A673 (cell line): ENCODE measurements at regions of chr2 and their contacts with region 1.

Region 1: DNA sequence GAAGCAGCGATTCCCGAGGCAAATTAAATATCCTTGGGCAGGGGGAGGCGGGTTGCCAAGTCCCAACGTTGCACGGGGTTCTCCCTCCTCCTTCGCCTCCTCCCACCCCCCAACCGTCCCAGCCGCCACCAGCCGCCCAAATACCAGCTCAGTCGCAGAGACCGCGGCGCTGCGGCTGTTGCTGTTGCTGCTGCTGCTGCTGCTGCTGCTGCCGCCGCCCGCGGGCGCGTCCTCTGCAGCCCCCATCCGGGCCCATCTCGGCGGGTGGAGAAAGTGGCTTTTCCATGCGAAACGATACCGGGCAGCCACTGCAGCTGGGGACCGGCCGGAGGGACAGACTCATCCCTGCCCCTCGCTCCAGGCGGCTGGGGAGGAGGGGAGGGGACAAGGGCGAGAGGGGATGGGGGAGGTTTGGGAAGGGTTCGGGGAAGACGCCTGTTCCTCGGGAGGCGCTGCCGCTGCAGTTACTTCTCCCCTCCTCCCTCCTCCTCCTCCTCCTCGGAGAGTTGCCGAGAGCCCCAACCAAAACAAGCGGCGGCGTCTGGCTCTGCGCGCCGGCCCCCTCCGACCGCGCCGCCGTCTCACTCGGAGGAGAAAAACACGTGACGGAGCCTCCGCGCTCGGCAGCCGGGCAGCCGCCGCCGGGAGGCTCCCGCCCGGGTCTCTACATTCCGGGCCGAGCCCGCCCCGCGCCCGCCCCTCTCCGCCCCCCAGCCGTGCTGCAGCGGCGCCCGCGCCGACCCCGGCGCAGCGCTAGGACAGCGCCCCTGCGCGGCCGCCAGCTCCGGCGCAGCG is at the start of gene IRS1:
- DNase-seq: peak; percentile 90
- H3K4me3 ChIP-seq: peak within 1 kb of the TSS; percentile 91
- H3K27ac ChIP-seq: peak within 1 kb of the TSS; percentile 88
- H3K4me1 ChIP-seq: peaks cover 27% of the 10 kb centered on the region
- H3K27me3 ChIP-seq: no peaks in the 10 kb centered on the region
- CTCF ChIP-seq: no peak
- total RNA-seq, gene IRS1: 27.9 and 29.3 TPM in 2 replicates

Region 2: GRCh38 chr2:225660262-225661131 is 1138.9 kb before region 1 on chr2:
- CTCF ChIA-PET with region 1: interaction called, 27 read pairs
- POLR2A ChIA-PET with region 1: no interaction called
- intact Hi-C with region 1: no loop called
- DNase-seq: peak; percentile 81
- H3K4me3 ChIP-seq: no peak overlapping the region
- H3K27ac ChIP-seq: no peak overlapping the region
- H3K4me1 ChIP-seq: peaks cover 12% of the 10 kb centered on the region
- H3K27me3 ChIP-seq: no peaks in the 10 kb centered on the region
- CTCF ChIP-seq: peak; percentile 93

Region 3: DNA sequence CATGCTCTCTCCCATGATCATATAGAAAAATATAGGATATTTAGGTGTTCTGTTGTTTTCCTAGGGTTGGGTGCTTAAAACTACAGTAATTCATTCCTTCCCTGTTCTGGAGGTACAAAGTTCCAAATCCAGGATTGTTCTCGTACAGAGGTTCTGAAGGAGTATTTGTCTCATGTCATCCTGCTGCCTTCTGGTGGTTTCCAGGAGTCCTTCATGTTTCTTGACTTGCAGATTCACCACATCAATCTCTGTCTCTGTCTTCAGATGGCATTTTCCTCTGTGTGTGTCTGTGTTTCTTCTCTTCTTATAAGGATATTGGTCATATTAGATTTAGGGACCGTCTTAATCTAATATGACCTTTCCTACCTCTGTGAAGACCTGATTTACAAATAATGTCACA is 1002.0 kb before region 1 on chr2:
- CTCF ChIA-PET with region 1: interaction called, 4 read pairs
- POLR2A ChIA-PET with region 1: no interaction called
- intact Hi-C with region 1: loop called (anchors 2 kb)
- DNase-seq: no peak
- H3K4me3 ChIP-seq: no peak overlapping the region
- H3K27ac ChIP-seq: peak overlapping the region; percentile 31
- H3K4me1 ChIP-seq: peaks cover 38% of the 10 kb centered on the region
- H3K27me3 ChIP-seq: no peaks in the 10 kb centered on the region
- CTCF ChIP-seq: no peak

Region 4: DNA sequence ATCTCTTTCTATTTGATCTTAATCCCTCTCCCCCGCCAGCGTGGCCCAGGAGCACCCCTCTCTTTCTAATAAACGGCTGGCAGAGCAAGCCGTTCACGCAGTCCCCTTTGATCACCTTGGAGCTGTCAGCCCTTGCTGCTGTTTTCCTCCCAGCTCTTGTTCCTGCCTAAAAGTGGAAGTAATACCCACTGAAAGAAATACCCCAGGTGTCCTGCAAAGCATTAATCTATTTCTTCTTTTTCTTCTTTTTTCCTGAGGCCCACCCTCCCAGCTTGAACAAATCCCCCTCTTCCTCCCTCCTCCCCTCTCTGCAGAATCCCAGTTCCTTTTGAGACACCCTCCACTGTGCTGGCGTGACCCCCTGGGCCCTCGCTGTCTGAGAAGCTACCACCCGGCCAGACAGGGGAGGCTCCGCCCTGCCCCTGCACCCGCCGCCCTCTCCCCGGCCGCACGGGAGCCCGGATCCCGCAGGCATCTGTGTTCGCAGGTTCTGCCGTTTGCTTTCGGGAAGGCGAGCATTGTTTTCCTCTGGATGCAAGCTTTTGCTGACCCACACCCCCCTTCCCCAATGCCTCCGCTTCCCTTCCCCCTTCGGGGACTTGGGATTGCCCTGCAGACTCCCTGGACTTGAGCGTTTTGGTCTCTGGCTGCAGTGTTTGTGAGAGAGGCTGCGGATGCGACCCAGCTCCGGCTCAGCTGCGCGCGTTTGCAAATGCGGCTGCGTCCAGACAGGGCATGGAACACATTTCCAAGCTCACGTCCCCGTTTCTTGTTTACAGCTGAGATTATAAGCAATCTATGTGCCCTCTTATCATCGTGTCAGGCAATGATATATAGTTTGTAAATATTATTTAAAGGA is 768.4 kb before region 1 on chr2:
- CTCF ChIA-PET with region 1: no interaction called
- POLR2A ChIA-PET with region 1: no interaction called
- intact Hi-C with region 1: loop called (anchors 5 kb)
- DNase-seq: peak; percentile 85
- H3K4me3 ChIP-seq: peak overlapping the region; percentile 59
- H3K27ac ChIP-seq: peak overlapping the region; percentile 61
- H3K4me1 ChIP-seq: peaks cover 15% of the 10 kb centered on the region
- H3K27me3 ChIP-seq: no peaks in the 10 kb centered on the region
- CTCF ChIP-seq: no peak

Region 5: DNA sequence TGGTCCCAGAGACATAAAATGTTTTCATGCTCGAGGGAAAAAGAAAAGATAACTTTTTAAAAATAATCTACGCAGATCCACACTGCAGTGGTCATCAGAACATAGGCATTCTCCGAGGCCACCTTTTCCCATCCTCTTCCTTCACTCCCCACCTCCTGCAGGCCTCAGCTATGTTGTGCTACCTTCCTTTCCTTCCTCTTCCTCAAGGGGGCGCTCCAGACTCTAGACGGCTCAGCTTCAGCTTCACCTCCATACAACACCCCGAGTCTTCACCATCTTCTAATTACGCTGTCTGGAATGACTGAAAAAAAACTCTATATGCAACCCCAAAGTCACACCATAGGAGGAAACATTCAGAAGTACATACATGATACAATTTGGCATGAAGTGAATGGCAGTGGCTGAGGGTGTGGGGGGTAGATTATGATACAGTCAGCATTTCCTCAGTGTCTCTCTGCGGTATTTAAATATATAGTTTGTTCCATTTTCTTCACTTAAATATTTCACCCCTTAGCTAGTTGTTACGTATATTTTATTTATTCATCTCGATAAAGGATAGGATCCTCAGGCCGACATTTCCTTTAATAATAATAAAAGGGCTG is 583.4 kb before region 1 on chr2:
- CTCF ChIA-PET with region 1: interaction called, 7 read pairs
- POLR2A ChIA-PET with region 1: no interaction called
- intact Hi-C with region 1: loop called (anchors 2 kb)
- DNase-seq: peak; percentile 87
- H3K4me3 ChIP-seq: no peak overlapping the region
- H3K27ac ChIP-seq: no peak overlapping the region
- H3K4me1 ChIP-seq: peaks cover 7% of the 10 kb centered on the region
- H3K27me3 ChIP-seq: no peaks in the 10 kb centered on the region
- CTCF ChIP-seq: peak; percentile 94

Region 6: DNA sequence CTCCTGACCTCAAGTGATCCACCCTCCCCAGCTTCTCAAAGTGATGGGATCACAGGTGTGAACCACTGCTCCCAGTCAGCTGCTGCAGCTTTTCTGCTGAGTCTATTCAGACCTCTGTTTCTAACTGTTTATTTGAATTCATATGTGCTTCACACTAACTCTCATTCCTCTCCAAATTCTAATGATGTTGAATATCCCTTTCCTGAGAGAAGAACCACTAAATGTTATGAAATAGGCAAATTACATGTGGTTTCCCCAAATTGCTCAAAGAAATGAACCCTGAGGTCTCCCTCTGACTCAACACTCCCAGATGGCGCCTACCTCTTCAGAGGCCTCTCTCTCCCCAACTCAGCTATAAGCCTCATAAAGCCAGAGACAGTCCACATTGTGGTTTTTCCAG is 98.3 kb before region 1 on chr2:
- CTCF ChIA-PET with region 1: no interaction called
- POLR2A ChIA-PET with region 1: no interaction called
- intact Hi-C with region 1: no loop called
- DNase-seq: no peak
- H3K4me3 ChIP-seq: no peak overlapping the region
- H3K27ac ChIP-seq: no peak overlapping the region
- H3K4me1 ChIP-seq: no peaks in the 10 kb centered on the region
- H3K27me3 ChIP-seq: no peaks in the 10 kb centered on the region
- CTCF ChIP-seq: no peak

Region 7: DNA sequence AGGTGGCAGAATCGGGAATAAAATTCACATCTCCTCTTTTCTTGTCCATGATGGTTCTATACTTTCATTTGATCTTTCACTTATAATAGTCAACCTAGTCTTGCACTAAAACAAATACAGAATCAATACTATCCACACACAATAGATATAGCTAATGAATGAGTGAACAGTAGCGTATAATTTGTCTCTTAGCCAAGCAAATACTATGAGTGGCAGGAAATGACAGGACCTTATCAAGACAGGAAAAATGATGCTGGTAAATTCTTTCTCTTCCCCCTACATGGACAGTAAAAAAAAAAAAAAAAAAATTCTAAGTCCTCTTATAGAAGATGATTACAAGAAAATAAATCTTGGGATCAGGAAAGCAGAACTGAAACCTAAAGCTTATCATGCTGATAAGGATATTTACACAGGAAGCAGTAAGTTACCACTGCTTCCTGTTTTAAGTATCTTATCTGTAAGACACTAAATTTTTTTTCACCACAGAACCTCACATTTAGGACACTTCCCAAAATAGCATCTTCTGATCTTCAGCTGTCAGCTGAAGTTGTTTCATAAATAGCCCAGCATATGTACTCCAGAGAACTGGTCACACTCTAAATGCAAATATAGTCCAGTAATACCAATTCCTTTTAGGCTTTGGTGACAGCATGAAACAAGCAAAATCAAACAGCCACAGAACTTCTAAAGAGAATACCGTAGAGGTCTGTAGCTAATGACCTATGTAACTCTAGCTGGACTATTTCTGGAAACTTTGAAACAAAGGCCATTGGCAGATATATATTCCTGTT is 26.8 kb before region 1 on chr2:
- CTCF ChIA-PET with region 1: interaction called, 10 read pairs
- POLR2A ChIA-PET with region 1: no interaction called
- intact Hi-C with region 1: no loop called
- DNase-seq: peak; percentile 92
- H3K4me3 ChIP-seq: peak overlapping the region; percentile 4
- H3K27ac ChIP-seq: peak overlapping the region; percentile 53
- H3K4me1 ChIP-seq: peaks cover 29% of the 10 kb centered on the region
- H3K27me3 ChIP-seq: no peaks in the 10 kb centered on the region
- CTCF ChIP-seq: no peak

Region 8: GRCh38 chr2:227106845-227107759 is 307.7 kb after region 1 on chr2:
- CTCF ChIA-PET with region 1: no interaction called
- POLR2A ChIA-PET with region 1: no interaction called
- intact Hi-C with region 1: loop called (anchors 2 kb)
- DNase-seq: peak; percentile 81
- H3K4me3 ChIP-seq: no peak overlapping the region
- H3K27ac ChIP-seq: no peak overlapping the region
- H3K4me1 ChIP-seq: no peaks in the 10 kb centered on the region
- H3K27me3 ChIP-seq: no peaks in the 10 kb centered on the region
- CTCF ChIP-seq: peak; percentile 87